ENCODE measurements at regions of chr18 and their contacts with region 1.

Region 1: GRCh38 chr18:32470713-32471633 is at the start of gene GAREM1:
- DNase-seq: peak; percentile 97
- H3K4me3 ChIP-seq: peak within 1 kb of the TSS; percentile 70 to 89 (median 74)
- H3K27ac ChIP-seq: peak within 1 kb of the TSS; percentile 9
- H3K4me1 ChIP-seq: peaks cover 12% of the 10 kb centered on the region
- H3K27me3 ChIP-seq: no peaks in the 10 kb centered on the region
- CTCF ChIP-seq: peak; percentile 35 to 71
- total RNA-seq, gene GAREM1: 6.8 to 9.0 TPM

Region 2: GRCh38 chr18:32092422-32093101 is 378.4 kb before region 1 on chr18:
- CTCF ChIA-PET with region 1: no interaction called
- dilution Hi-C with region 1: no loop called
- in situ Hi-C with region 1: no loop called
- intact Hi-C with region 1: loop called (anchors 5 kb)
- DNase-seq: peak; percentile 96
- H3K4me3 ChIP-seq: peak overlapping the region; percentile 91 to 97 (median 92)
- H3K27ac ChIP-seq: peak overlapping the region; percentile 87
- H3K4me1 ChIP-seq: peaks cover 15% of the 10 kb centered on the region
- H3K27me3 ChIP-seq: no peaks in the 10 kb centered on the region
- CTCF ChIP-seq: no peak

Region 3: DNA sequence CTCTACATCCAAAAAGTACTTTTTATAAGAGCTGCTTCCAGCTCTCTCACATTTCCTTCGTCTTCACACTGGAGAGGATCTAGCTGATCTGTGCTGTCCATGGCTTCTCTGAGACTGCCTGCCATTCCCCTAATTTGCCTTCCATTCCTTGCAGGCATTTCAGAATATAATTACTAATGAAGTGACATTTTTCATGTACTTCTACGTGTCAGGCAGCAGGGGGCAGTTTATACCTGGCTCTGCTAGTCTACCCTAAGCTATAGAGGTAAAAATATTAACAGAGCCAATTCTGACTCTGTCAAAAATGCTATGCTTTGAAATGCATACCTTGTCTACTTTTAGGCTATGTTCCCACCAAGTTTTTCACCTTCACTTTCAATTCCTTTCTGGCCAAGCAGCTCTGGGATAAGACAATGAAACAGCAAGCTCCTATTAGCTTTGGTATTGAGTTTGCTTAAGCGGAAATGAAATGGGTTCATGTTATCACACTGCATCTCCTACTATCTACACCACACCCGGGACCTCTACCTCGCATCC is 199.2 kb before region 1 on chr18:
- CTCF ChIA-PET with region 1: interaction called, 20 read pairs
- dilution Hi-C with region 1: no loop called
- in situ Hi-C with region 1: no loop called
- intact Hi-C with region 1: loop called (anchors 1 kb)
- DNase-seq: peak; percentile 8
- H3K4me3 ChIP-seq: no peak overlapping the region
- H3K27ac ChIP-seq: no peak overlapping the region
- H3K4me1 ChIP-seq: no peaks in the 10 kb centered on the region
- H3K27me3 ChIP-seq: no peaks in the 10 kb centered on the region
- CTCF ChIP-seq: peak; percentile 71

Region 4: GRCh38 chr18:32317651-32318050 is 153.3 kb before region 1 on chr18:
- CTCF ChIA-PET with region 1: interaction called, 42 read pairs
- dilution Hi-C with region 1: no loop called
- in situ Hi-C with region 1: no loop called
- intact Hi-C with region 1: no loop called
- DNase-seq: no peak
- H3K4me3 ChIP-seq: no peak overlapping the region
- H3K27ac ChIP-seq: no peak overlapping the region
- H3K4me1 ChIP-seq: peaks cover 5% of the 10 kb centered on the region
- H3K27me3 ChIP-seq: no peaks in the 10 kb centered on the region
- CTCF ChIP-seq: no peak

Region 5: GRCh38 chr18:32530947-32531651 is 60.1 kb after region 1 on chr18:
- CTCF ChIA-PET with region 1: no interaction called
- dilution Hi-C with region 1: no loop called
- in situ Hi-C with region 1: no loop called
- intact Hi-C with region 1: loop called (anchors 5 kb)
- DNase-seq: peak; percentile 95
- H3K4me3 ChIP-seq: no peak overlapping the region
- H3K27ac ChIP-seq: peak overlapping the region; percentile 19
- H3K4me1 ChIP-seq: peaks cover 22% of the 10 kb centered on the region
- H3K27me3 ChIP-seq: no peaks in the 10 kb centered on the region
- CTCF ChIP-seq: no peak

Region 6: DNA sequence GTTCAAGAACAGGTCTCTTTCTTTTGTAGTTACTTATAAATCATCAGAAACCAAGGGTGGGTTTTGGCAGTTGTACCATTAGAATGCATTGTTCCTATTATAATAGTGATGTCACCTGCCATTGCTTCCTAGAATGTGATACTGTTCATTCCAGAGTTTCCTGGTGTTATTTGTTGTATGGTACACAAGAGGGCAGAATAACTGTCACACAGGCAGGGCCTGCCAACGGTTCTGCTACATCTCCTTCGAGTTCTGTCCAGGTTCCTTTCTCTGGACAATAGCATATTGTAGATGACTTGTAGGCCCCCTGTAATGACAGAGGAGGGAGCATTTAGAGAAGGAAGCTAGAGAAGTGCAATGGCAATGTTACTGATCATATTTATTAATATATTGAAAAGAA is 203.5 kb after region 1 on chr18:
- CTCF ChIA-PET with region 1: no interaction called
- dilution Hi-C with region 1: no loop called
- in situ Hi-C with region 1: no loop called
- intact Hi-C with region 1: no loop called
- DNase-seq: no peak
- H3K4me3 ChIP-seq: no peak overlapping the region
- H3K27ac ChIP-seq: no peak overlapping the region
- H3K4me1 ChIP-seq: no peaks in the 10 kb centered on the region
- H3K27me3 ChIP-seq: peaks cover 3% of the 10 kb centered on the region
- CTCF ChIP-seq: peak; percentile 18 to 44

Measured in mammary epithelial cell (primary cell).